CD4-positive, alpha-beta T cell (primary cell): ENCODE measurements at regions of chr4 and their contacts with region 1.

Region 1: DNA sequence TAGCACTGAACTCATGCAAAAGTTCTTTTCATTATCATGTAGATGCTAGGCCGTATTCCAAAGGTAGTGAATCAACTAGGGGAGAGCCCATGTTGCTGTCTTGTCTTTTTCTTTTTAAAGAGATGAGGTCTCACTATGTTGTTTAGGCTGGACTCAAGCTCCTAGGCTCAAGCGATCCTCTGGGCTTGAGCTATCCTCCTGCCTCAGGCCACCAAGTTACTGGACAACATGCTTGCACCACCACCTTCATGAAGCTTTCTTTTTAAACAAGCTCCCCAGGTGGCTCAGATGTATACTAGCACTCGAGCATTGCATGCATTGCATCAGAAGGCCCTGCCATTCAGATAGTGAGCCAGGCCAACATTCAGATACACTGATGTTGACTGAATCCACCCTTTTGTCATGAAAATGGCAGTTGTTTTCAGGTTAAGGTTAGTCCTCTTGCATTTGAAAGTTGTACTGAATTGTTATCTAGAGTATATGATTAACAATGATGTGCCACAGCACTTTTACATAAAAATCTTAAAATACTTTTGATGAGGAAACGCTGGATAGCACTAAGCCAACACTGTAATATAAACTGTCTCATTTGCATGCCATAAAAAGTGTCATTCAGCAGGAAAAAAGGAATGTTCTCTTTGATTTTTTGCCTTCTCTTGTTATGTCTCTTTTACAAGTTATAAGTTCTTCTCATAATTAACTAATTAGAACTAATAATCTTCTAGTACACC is 76.7 kb downstream of the FNIP2 start:
- DNase-seq: no peak
- ATAC-seq: no peak
- H3K4me3 ChIP-seq: no peak overlapping the region
- H3K4me3 Mint-ChIP-seq: no peak overlapping the region
- H3K27ac ChIP-seq: no peak overlapping the region
- H3K27ac Mint-ChIP-seq: no peak overlapping the region
- H3K4me1 ChIP-seq: no peaks in the 10 kb centered on the region
- H3K4me1 Mint-ChIP-seq: peaks cover 6% of the 10 kb centered on the region
- H3K27me3 ChIP-seq: no peaks in the 10 kb centered on the region
- H3K27me3 Mint-ChIP-seq: no peaks in the 10 kb centered on the region
- CTCF ChIP-seq: no peak

Region 2: DNA sequence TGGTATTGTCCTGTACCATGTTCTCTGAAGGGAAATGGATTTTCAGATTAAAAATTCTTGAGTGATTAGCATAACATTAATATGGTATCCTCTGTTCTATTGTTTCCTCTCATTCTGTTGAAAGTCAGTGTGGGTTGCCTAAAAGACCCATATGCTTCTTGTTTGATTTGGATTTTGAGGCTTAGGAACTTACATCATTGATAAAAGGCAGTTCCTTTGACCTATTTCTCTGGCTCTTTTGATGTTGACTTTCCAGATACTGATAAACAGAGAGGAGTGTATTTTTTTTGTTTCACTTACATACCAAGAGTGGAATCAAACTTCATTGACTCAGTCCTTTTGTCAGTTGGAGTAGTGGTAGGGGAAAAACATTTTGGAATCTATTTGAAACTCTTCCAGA is 602.4 kb before region 1 on chr4:
- CTCF ChIA-PET with region 1: no interaction called
- POLR2A ChIA-PET with region 1: no interaction called
- intact Hi-C with region 1: loop called in 1 of 2 experiments (anchors 10 kb)
- DNase-seq: no peak
- ATAC-seq: no peak
- H3K4me3 ChIP-seq: no peak overlapping the region
- H3K4me3 Mint-ChIP-seq: no peak overlapping the region
- H3K27ac ChIP-seq: no peak overlapping the region
- H3K27ac Mint-ChIP-seq: no peak overlapping the region
- H3K4me1 ChIP-seq: no peaks in the 10 kb centered on the region
- H3K4me1 Mint-ChIP-seq: no peaks in the 10 kb centered on the region
- H3K27me3 ChIP-seq: no peaks in the 10 kb centered on the region
- H3K27me3 Mint-ChIP-seq: peaks cover 6% of the 10 kb centered on the region
- CTCF ChIP-seq: no peak

Region 3: GRCh38 chr4:159283696-159284492 is 438.4 kb after region 1 on chr4:
- CTCF ChIA-PET with region 1: no interaction called
- POLR2A ChIA-PET with region 1: no interaction called
- intact Hi-C with region 1: no loop called
- DNase-seq: no peak
- ATAC-seq: no peak
- H3K4me3 ChIP-seq: no peak overlapping the region
- H3K4me3 Mint-ChIP-seq: no peak overlapping the region
- H3K27ac ChIP-seq: no peak overlapping the region
- H3K27ac Mint-ChIP-seq: no peak overlapping the region
- H3K4me1 ChIP-seq: no peaks in the 10 kb centered on the region
- H3K4me1 Mint-ChIP-seq: peaks cover 5% of the 10 kb centered on the region
- H3K27me3 ChIP-seq: no peaks in the 10 kb centered on the region
- H3K27me3 Mint-ChIP-seq: no peaks in the 10 kb centered on the region
- CTCF ChIP-seq: no peak